ENCODE measurements at regions of chr4 and their contacts with region 1.

Region 1: GRCh38 chr4:109294006-109294405 is 8.5 kb downstream of the COL25A1 start:
- DNase-seq: peak; percentile 90
- H3K4me3 ChIP-seq: no peak overlapping the region
- H3K27ac ChIP-seq: peak overlapping the region; percentile 33
- H3K4me1 ChIP-seq: peaks cover 46% of the 10 kb centered on the region
- H3K27me3 ChIP-seq: no peaks in the 10 kb centered on the region
- CTCF ChIP-seq: peak; percentile 80

Region 2: GRCh38 chr4:108674356-108674977 is 619.5 kb before region 1 on chr4:
- CTCF ChIA-PET with region 1: no interaction called
- POLR2A ChIA-PET with region 1: no interaction called
- intact Hi-C with region 1: loop called (anchors 10 kb)
- DNase-seq: peak; percentile 81
- H3K4me3 ChIP-seq: no peak overlapping the region
- H3K27ac ChIP-seq: peak overlapping the region; percentile 83
- H3K4me1 ChIP-seq: peaks cover 34% of the 10 kb centered on the region
- H3K27me3 ChIP-seq: no peaks in the 10 kb centered on the region
- CTCF ChIP-seq: no peak

Region 3: DNA sequence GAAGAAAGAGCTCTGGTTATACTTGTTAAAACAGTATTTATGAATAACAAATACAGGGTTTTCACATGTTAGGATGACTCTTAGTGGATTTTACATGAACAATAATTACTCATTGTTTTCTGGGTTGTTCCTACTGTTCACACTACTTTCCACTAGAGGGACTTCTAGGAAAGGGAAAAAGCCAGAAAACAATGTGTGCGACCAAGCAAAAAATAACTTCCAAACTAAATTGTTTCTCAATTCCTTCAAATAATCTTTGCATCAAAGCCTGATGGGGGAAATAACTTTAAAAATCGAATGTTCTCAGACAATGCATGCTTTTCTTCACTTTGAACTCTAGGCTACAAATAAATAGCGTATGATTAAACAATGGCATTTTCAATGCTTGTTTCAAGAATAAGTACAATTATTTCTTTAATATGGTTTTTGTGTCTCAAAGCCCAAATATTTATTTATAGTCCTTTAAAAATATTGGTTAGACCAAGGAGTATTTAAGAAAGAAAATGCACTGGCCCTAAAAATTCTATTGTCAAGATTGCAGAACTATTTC is 459.1 kb before region 1 on chr4:
- CTCF ChIA-PET with region 1: no interaction called
- POLR2A ChIA-PET with region 1: no interaction called
- intact Hi-C with region 1: loop called (anchors 2 kb)
- DNase-seq: peak; percentile 75
- H3K4me3 ChIP-seq: no peak overlapping the region
- H3K27ac ChIP-seq: no peak overlapping the region
- H3K4me1 ChIP-seq: peaks cover 51% of the 10 kb centered on the region
- H3K27me3 ChIP-seq: no peaks in the 10 kb centered on the region
- CTCF ChIP-seq: peak; percentile 79

Region 4: GRCh38 chr4:108959491-108959890 is 334.5 kb before region 1 on chr4:
- CTCF ChIA-PET with region 1: no interaction called
- POLR2A ChIA-PET with region 1: no interaction called
- intact Hi-C with region 1: loop called (anchors 10 kb)
- DNase-seq: no peak
- H3K4me3 ChIP-seq: no peak overlapping the region
- H3K27ac ChIP-seq: no peak overlapping the region
- H3K4me1 ChIP-seq: peaks cover 49% of the 10 kb centered on the region
- H3K27me3 ChIP-seq: no peaks in the 10 kb centered on the region
- CTCF ChIP-seq: no peak

Region 5: GRCh38 chr4:109078724-109079123 is 215.3 kb before region 1 on chr4:
- CTCF ChIA-PET with region 1: no interaction called
- POLR2A ChIA-PET with region 1: no interaction called
- intact Hi-C with region 1: loop called (anchors 10 kb)
- DNase-seq: peak; percentile 11
- H3K4me3 ChIP-seq: no peak overlapping the region
- H3K27ac ChIP-seq: no peak overlapping the region
- H3K4me1 ChIP-seq: peaks cover 23% of the 10 kb centered on the region
- H3K27me3 ChIP-seq: no peaks in the 10 kb centered on the region
- CTCF ChIP-seq: no peak

Region 6: GRCh38 chr4:109164011-109164410 is 130.0 kb before region 1 on chr4:
- CTCF ChIA-PET with region 1: no interaction called
- POLR2A ChIA-PET with region 1: no interaction called
- intact Hi-C with region 1: loop called (anchors 10 kb)
- DNase-seq: peak; percentile 61
- H3K4me3 ChIP-seq: no peak overlapping the region
- H3K27ac ChIP-seq: no peak overlapping the region
- H3K4me1 ChIP-seq: peaks cover 28% of the 10 kb centered on the region
- H3K27me3 ChIP-seq: no peaks in the 10 kb centered on the region
- CTCF ChIP-seq: no peak

Region 7: DNA sequence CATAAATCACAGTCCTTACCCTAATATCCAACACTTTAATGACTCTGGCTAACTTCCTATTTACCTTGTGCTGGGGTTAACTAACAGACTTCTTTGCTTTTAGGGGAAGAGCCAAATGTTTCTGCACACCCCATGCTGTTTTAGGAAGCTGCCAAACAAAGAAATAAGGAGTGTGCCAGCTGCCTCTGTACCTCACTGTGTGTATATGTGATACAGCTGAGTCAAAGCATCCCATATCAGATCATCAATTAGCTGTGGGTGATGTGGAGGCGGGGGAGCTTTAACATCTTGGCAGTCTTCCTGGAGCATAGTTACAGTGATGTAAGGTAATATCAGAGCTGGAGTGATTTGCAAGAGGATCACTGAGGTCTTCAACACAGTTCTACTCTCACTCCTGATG is 86.9 kb before region 1 on chr4:
- CTCF ChIA-PET with region 1: no interaction called
- POLR2A ChIA-PET with region 1: no interaction called
- intact Hi-C with region 1: loop called (anchors 5 kb)
- DNase-seq: peak; percentile 96
- H3K4me3 ChIP-seq: no peak overlapping the region
- H3K27ac ChIP-seq: peak overlapping the region; percentile 58
- H3K4me1 ChIP-seq: peaks cover 34% of the 10 kb centered on the region
- H3K27me3 ChIP-seq: no peaks in the 10 kb centered on the region
- CTCF ChIP-seq: no peak